ENCODE measurements at regions of chr13 and their contacts with region 1.

Region 1: DNA sequence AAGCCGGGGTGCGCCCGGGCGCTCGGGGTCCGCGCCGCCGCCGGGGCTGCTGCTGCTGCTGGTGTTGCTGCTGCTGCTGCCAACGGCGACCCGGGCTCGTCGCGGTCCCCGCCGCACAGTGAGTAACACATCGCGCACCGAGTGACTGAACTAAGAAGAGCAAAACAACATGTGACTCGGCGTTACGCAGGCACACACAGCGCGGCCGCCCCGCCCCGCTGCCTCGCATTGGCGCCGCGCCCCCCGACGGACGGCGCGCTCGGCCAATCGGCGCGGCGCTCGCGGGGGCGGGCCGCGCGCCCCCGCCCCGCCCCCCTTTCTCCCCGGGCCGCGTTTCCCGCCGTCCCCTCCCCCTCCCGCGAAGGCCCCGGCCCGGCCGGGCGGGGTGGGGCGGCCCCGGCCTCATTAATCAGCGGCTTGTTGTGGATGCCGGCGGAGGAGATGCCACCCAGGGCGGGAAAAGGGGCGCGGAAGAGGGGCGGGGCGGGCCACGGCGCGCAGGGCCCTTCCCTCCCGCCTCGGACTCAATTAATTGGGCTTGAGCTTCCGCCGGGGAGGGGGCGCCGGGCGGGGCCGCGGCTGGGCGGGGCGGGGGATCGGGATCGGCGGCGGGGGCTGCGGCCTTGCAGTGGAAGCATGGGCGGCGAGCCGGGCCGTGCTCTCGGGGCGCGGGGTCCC is at the start of gene IRS2:
- DNase-seq: peak; percentile 95
- ATAC-seq: peak; percentile 91
- H3K4me3 Mint-ChIP-seq: peak within 1 kb of the TSS; percentile 74
- H3K27ac Mint-ChIP-seq: peak within 1 kb of the TSS; percentile 69
- H3K4me1 Mint-ChIP-seq: peaks cover 18% of the 10 kb centered on the region
- H3K27me3 Mint-ChIP-seq: no peaks in the 10 kb centered on the region
- total RNA-seq, gene IRS2: 1.4 to 1.5 TPM

Region 2: DNA sequence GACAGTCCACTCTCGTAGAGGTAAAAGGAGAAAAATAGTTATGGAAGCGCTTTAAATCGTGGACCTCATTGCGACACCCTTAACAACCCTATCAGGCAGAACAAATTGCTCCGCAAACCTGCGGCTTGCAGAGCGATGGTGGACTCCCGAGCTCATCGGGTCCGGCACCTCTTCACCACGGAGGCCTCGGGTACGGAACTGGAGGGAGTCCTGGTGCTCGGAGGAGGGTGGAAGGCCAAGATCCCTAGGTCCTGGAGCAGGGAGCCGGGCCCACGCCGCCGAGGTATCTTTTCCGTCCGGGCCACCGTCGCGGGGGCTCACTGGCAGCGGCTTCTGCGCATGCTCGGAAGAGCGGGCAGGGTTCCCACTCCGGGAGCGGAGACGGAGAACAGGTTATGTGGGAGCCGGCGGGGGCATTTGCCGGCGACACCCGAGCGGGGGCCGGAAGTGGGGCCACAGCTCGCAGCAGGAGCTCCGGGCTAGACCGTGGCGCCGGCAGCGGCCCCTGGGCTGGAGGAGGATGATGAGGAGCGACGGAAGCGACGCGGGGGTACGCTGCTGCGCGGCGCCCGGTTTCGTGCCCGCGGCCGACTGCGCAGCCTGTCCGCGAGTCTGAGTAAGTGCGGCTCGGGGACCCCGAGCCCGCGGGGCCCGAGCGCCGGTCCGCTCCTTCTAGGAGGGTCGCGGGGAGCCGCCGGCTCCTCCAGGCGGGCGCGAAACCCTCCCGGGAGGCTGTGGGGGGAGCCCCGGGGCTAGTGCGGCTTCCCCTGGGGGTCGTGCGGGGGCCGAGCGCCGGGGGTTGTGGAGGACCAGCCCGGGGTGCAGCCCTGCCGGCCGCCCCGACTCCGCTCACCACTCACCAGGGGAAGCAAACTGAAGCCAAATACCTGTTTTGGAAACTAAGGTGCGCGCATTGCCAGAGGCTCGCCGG is 1568.3 kb before region 1 on chr13 and contains the start of gene ABHD13:
- CTCF ChIA-PET with region 1: interaction called, 3 read pairs
- POLR2A ChIA-PET with region 1: no interaction called
- intact Hi-C with region 1: loop called (anchors 1 to 2 kb)
- DNase-seq: peak; percentile 94
- ATAC-seq: peak; percentile 85
- H3K4me3 Mint-ChIP-seq: peak within 1 kb of the TSS; percentile 88
- H3K27ac Mint-ChIP-seq: peak within 1 kb of the TSS; percentile 94
- H3K4me1 Mint-ChIP-seq: peaks cover 52% of the 10 kb centered on the region
- H3K27me3 Mint-ChIP-seq: no peaks in the 10 kb centered on the region
- total RNA-seq, gene ABHD13: 3.4 to 4.4 TPM

Region 3: GRCh38 chr13:109145631-109146030 is 641.0 kb before region 1 on chr13:
- CTCF ChIA-PET with region 1: no interaction called
- POLR2A ChIA-PET with region 1: no interaction called
- intact Hi-C with region 1: loop called in 1 of 2 experiments (anchors 1 kb)
- DNase-seq: peak; percentile 31
- ATAC-seq: peak; percentile 49
- H3K4me3 Mint-ChIP-seq: no peak overlapping the region
- H3K27ac Mint-ChIP-seq: no peak overlapping the region
- H3K4me1 Mint-ChIP-seq: no peaks in the 10 kb centered on the region
- H3K27me3 Mint-ChIP-seq: peaks cover 29% of the 10 kb centered on the region

Region 4: DNA sequence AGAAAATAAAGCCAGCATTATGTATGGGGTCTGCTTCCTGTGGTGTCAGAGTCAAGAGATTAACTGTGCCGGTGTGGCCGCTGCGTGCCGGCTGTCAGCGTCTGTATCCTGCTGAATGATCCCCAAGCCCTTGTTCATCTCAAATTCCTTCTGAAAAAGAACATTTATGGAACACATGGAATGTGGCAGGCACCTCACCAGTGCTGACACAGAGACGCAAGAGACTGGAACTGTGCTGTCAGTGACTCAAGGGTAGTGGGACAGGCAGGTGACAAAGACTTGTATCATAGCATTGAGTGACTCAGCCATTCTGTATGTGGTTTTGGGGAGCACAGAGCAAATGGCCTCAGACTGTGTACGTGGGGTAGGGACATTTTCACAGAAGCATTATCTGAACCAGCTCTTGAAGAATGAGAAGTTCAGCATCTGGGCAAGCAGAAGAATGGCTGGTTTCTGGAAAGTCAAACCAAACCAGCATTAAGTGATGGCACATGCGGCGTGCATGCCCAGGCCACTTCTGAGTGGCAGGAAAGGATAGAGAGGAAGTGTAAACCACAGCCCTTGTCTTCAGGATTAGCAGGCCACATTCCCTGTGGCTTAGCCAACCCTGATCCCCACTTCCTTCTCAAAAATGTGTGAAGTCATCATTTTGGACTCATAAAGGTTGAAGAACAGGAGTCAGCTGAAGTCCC is 53.8 kb after region 1 on chr13:
- CTCF ChIA-PET with region 1: no interaction called
- POLR2A ChIA-PET with region 1: no interaction called
- intact Hi-C with region 1: loop called in 1 of 2 experiments (anchors 2 kb)
- DNase-seq: peak; percentile 52
- ATAC-seq: peak; percentile 99
- H3K4me3 Mint-ChIP-seq: no peak overlapping the region
- H3K27ac Mint-ChIP-seq: no peak overlapping the region
- H3K4me1 Mint-ChIP-seq: peaks cover 11% of the 10 kb centered on the region
- H3K27me3 Mint-ChIP-seq: peaks cover 19% of the 10 kb centered on the region

Region 5: DNA sequence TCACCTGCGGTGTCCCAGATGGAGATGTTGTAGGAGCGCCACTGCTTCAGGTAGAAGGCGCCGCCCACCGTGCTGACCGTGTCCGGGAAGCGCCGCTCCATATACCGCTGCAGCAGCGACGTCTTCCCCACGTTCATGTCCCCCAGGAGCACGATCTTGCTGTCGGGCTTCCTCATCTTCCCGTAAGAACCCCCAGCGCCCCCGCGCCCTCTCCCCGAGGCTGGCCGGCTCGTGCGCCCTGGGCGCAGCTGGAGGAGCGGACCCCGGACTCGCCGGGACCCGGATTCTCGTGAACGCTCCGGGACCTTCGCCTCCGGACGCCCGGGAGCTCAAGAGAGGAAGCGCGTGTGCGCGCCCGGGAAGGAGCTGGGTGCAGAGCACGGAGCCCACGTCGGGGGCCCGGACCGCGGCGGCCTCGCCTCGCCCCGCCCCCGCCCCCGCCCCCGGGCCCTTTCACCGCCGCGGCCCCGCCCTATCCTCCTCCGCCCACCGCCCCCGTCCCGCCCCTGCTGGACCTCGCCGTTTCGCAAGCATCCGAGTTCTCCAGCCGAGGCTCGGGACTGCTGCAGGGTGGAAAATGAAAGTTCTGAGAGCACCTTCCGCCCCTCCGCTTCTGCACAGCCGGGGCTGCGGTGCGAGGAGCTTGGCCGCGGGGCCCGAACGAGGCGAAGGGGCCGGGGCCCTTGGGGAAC is 774.9 kb after region 1 on chr13 and contains the start of gene RAB20:
- CTCF ChIA-PET with region 1: no interaction called
- POLR2A ChIA-PET with region 1: no interaction called
- intact Hi-C with region 1: loop called in 1 of 2 experiments (anchors 10 kb)
- DNase-seq: peak; percentile 76
- ATAC-seq: peak; percentile 79
- H3K4me3 Mint-ChIP-seq: peak within 1 kb of the TSS; percentile 77
- H3K27ac Mint-ChIP-seq: peak within 1 kb of the TSS; percentile 85
- H3K4me1 Mint-ChIP-seq: peaks cover 18% of the 10 kb centered on the region
- H3K27me3 Mint-ChIP-seq: peaks cover 4% of the 10 kb centered on the region
- total RNA-seq, gene RAB20: 6.0 to 9.0 TPM

Region 6: GRCh38 chr13:111153279-111153976 is 1366.8 kb after region 1 on chr13:
- CTCF ChIA-PET with region 1: no interaction called
- POLR2A ChIA-PET with region 1: no interaction called
- intact Hi-C with region 1: loop called in 1 of 2 experiments (anchors 10 kb)
- DNase-seq: peak; percentile 96
- ATAC-seq: peak; percentile 89
- H3K4me3 Mint-ChIP-seq: peak overlapping the region; percentile 83
- H3K27ac Mint-ChIP-seq: peak overlapping the region; percentile 90
- H3K4me1 Mint-ChIP-seq: peaks cover 33% of the 10 kb centered on the region
- H3K27me3 Mint-ChIP-seq: no peaks in the 10 kb centered on the region